CD4-positive, alpha-beta T cell (primary cell): ENCODE measurements at regions of chr12 and their contacts with region 1.

Region 1: GRCh38 chr12:75390899-75391538 is at the start of gene GLIPR1L2:
- DNase-seq: peak; percentile 70 to 96 (median 84)
- ATAC-seq: peak; percentile 81
- H3K4me3 ChIP-seq: peak within 1 kb of the TSS; percentile 77
- H3K4me3 Mint-ChIP-seq: peak within 1 kb of the TSS; percentile 93
- H3K27ac ChIP-seq: peak within 1 kb of the TSS; percentile 64 to 91
- H3K27ac Mint-ChIP-seq: peak within 1 kb of the TSS; percentile 98
- H3K4me1 ChIP-seq: peaks cover 9% of the 10 kb centered on the region
- H3K4me1 Mint-ChIP-seq: peaks cover 63% of the 10 kb centered on the region
- H3K27me3 ChIP-seq: no peaks in the 10 kb centered on the region
- H3K27me3 Mint-ChIP-seq: no peaks in the 10 kb centered on the region
- CTCF ChIP-seq: peak; percentile 66
- total RNA-seq, gene GLIPR1L2: 0.44 to 0.56 TPM

Region 2: DNA sequence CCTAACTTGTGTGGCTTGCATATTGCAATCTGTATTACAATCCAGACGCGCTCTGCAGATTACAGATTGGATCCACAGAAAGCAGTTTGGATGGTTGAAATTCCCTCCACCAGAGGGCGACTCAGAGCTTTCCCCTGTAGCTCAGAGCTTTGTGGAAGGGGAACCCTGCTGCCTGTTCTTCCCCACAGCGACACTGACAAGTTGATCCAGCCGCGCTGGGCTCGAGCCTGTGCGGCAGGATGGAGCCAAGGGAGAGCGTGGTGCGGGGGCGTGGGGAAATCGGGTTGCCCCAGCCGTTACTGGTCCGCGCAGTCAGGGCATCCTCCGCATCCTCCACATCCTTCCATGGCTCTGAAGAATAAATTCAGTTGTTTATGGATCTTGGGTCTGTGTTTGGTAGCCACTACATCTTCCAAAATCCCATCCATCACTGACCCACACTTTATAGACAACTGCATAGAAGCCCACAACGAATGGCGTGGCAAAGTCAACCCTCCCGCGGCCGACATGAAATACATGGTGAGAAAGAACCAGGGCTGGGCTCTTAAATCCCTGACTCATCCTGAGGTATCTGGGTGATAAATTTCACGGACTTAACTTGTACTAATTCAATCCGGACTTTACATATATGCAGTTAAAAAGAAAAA is 56.5 kb before region 1 on chr12 and contains the start of gene GLIPR1L1:
- CTCF ChIA-PET with region 1: interaction called, 9 read pairs
- POLR2A ChIA-PET with region 1: interaction called, 3 read pairs
- intact Hi-C with region 1: loop called (anchors 2 to 5 kb)
- DNase-seq: peak; percentile 67 to 90 (median 78)
- ATAC-seq: peak; percentile 79
- H3K4me3 ChIP-seq: peak within 1 kb of the TSS; percentile 39
- H3K4me3 Mint-ChIP-seq: peak within 1 kb of the TSS; percentile 57
- H3K27ac ChIP-seq: no peak within 1 kb of the TSS
- H3K27ac Mint-ChIP-seq: no peak within 1 kb of the TSS
- H3K4me1 ChIP-seq: peaks cover 17% of the 10 kb centered on the region
- H3K4me1 Mint-ChIP-seq: peaks cover 21% of the 10 kb centered on the region
- H3K27me3 ChIP-seq: peaks cover 12 to 16% of the 10 kb centered on the region in 2 experiments
- H3K27me3 Mint-ChIP-seq: peaks cover 35% of the 10 kb centered on the region
- CTCF ChIP-seq: peak; percentile 90
- total RNA-seq, gene GLIPR1L1: not detected

Region 3: DNA sequence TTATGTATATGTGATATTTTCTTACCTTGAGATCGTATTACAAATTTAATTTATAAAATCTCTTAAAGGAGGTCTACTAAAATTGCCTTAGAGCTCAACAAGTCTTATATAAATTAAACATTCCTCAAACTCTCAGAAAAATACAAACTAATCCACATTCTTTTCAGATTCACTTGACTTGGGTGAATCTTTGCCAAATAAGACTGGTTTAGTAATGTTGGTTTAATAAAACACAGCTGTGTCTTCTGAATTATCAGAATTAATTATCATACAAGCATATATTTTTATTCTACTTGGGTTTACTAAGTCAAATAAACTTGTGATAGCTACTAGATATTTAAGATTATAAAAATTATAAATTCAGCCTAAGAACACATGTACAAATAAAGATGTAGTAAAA is 13.2 kb after region 1 on chr12:
- CTCF ChIA-PET with region 1: interaction called, 3 read pairs
- POLR2A ChIA-PET with region 1: interaction called, 5 read pairs
- intact Hi-C with region 1: loop called in 1 of 2 experiments (anchors 1 kb)
- DNase-seq: no peak
- ATAC-seq: no peak
- H3K4me3 ChIP-seq: no peak overlapping the region
- H3K4me3 Mint-ChIP-seq: no peak overlapping the region
- H3K27ac ChIP-seq: no peak overlapping the region
- H3K27ac Mint-ChIP-seq: no peak overlapping the region
- H3K4me1 ChIP-seq: no peaks in the 10 kb centered on the region
- H3K4me1 Mint-ChIP-seq: no peaks in the 10 kb centered on the region
- H3K27me3 ChIP-seq: no peaks in the 10 kb centered on the region
- H3K27me3 Mint-ChIP-seq: no peaks in the 10 kb centered on the region
- CTCF ChIP-seq: no peak

Region 4: DNA sequence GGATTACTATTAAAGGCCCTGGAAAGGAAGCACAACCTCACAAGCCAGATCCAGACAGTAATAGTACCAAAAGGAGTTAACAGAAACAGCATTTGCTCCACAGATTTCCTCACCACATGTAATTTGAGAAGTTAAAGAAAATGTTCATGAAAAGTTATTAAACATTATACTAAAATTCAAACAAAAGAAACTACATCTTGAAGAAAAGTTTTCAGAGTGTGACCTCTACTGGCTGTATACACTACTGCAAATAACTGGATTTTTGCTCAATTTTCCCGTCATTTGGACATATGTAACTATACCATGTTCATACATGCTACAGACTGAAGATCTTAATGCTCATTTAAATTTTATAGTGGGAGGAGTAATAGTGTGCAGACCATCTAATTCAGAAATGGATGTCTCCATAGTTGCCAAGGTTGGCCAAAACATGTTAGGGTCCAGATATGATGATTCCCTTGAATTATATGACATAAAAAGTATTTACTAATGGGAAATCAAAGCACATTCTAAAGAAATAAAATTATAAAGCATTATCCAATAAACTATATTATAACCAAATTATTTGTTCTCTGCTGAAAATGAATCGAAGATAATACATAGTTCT is 114.8 kb after region 1 on chr12:
- CTCF ChIA-PET with region 1: interaction called, 6 read pairs
- POLR2A ChIA-PET with region 1: interaction called, 18 read pairs
- intact Hi-C with region 1: loop called in 1 of 2 experiments (anchors 2 kb)
- DNase-seq: peak in 3 of 14 experiments; percentile 42 to 57 (median 56)
- ATAC-seq: peak; percentile 69
- H3K4me3 ChIP-seq: no peak overlapping the region
- H3K4me3 Mint-ChIP-seq: no peak overlapping the region
- H3K27ac ChIP-seq: no peak overlapping the region
- H3K27ac Mint-ChIP-seq: peak overlapping the region; percentile 31
- H3K4me1 ChIP-seq: peaks cover 5% of the 10 kb centered on the region
- H3K4me1 Mint-ChIP-seq: peaks cover 28% of the 10 kb centered on the region
- H3K27me3 ChIP-seq: no peaks in the 10 kb centered on the region
- H3K27me3 Mint-ChIP-seq: no peaks in the 10 kb centered on the region
- CTCF ChIP-seq: peak; percentile 72

Region 5: GRCh38 chr12:75511116-75512048 is 120.4 kb after region 1 on chr12 and contains the start of gene KRR1:
- CTCF ChIA-PET with region 1: interaction called, 4 read pairs
- POLR2A ChIA-PET with region 1: interaction called, 18 read pairs
- intact Hi-C with region 1: no loop called
- DNase-seq: peak; percentile 74 to 98 (median 85)
- ATAC-seq: peak; percentile 97
- H3K4me3 ChIP-seq: peak within 1 kb of the TSS; percentile 81
- H3K4me3 Mint-ChIP-seq: peak within 1 kb of the TSS; percentile 99
- H3K27ac ChIP-seq: peak within 1 kb of the TSS; percentile 81 to 92
- H3K27ac Mint-ChIP-seq: peak within 1 kb of the TSS; percentile 95
- H3K4me1 ChIP-seq: peaks cover 8% of the 10 kb centered on the region
- H3K4me1 Mint-ChIP-seq: peaks cover 38% of the 10 kb centered on the region
- H3K27me3 ChIP-seq: no peaks in the 10 kb centered on the region
- H3K27me3 Mint-ChIP-seq: no peaks in the 10 kb centered on the region
- CTCF ChIP-seq: no peak
- total RNA-seq, gene KRR1: 144 to 148 TPM

Region 6: DNA sequence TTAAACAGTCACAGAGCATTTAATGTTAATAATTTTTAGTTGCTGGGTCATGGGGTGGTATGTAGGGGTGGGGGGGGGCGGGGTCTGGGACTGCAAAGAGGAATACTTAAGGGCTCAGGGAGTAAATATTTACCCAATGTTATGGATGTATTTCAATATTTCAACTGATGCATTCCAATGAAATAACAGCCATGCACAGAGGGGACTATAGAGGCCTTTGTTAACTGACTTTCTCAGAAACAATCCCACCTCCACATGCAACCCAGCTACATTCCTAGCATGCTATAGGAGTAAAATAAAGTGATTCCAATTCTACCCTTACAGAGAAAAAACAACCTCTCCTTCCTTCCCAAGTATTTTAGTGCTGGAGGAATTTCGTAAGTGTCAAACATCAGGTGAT is 965.1 kb after region 1 on chr12:
- CTCF ChIA-PET with region 1: no interaction called
- POLR2A ChIA-PET with region 1: no interaction called
- intact Hi-C with region 1: loop called in 1 of 2 experiments (anchors 10 kb)
- DNase-seq: no peak
- ATAC-seq: no peak
- H3K4me3 ChIP-seq: no peak overlapping the region
- H3K4me3 Mint-ChIP-seq: no peak overlapping the region
- H3K27ac ChIP-seq: no peak overlapping the region
- H3K27ac Mint-ChIP-seq: no peak overlapping the region
- H3K4me1 ChIP-seq: no peaks in the 10 kb centered on the region
- H3K4me1 Mint-ChIP-seq: no peaks in the 10 kb centered on the region
- H3K27me3 ChIP-seq: no peaks in the 10 kb centered on the region
- H3K27me3 Mint-ChIP-seq: no peaks in the 10 kb centered on the region
- CTCF ChIP-seq: no peak

Region 7: GRCh38 chr12:76763743-76764675 is 1373.0 kb after region 1 on chr12 and contains the start of gene ZDHHC17:
- CTCF ChIA-PET with region 1: no interaction called
- POLR2A ChIA-PET with region 1: interaction called, 5 read pairs
- intact Hi-C with region 1: loop called in 1 of 2 experiments (anchors 10 kb)
- DNase-seq: peak; percentile 86 to 96 (median 92)
- ATAC-seq: peak; percentile 81
- H3K4me3 ChIP-seq: peak within 1 kb of the TSS; percentile 95
- H3K4me3 Mint-ChIP-seq: peak within 1 kb of the TSS; percentile 99
- H3K27ac ChIP-seq: peak within 1 kb of the TSS; percentile 85 to 95
- H3K27ac Mint-ChIP-seq: peak within 1 kb of the TSS; percentile 99
- H3K4me1 ChIP-seq: peaks cover 29% of the 10 kb centered on the region
- H3K4me1 Mint-ChIP-seq: peaks cover 60% of the 10 kb centered on the region
- H3K27me3 ChIP-seq: no peaks in the 10 kb centered on the region
- H3K27me3 Mint-ChIP-seq: no peaks in the 10 kb centered on the region
- CTCF ChIP-seq: no peak
- total RNA-seq, gene ZDHHC17: 36.4 to 42.6 TPM